Activated CD4-positive, alpha-beta T cell treated with anti-CD3 and anti-CD28 coated beads for 36 hours (primary cell): ENCODE measurements at regions of chr20 and their contacts with region 1.

Region 1: DNA sequence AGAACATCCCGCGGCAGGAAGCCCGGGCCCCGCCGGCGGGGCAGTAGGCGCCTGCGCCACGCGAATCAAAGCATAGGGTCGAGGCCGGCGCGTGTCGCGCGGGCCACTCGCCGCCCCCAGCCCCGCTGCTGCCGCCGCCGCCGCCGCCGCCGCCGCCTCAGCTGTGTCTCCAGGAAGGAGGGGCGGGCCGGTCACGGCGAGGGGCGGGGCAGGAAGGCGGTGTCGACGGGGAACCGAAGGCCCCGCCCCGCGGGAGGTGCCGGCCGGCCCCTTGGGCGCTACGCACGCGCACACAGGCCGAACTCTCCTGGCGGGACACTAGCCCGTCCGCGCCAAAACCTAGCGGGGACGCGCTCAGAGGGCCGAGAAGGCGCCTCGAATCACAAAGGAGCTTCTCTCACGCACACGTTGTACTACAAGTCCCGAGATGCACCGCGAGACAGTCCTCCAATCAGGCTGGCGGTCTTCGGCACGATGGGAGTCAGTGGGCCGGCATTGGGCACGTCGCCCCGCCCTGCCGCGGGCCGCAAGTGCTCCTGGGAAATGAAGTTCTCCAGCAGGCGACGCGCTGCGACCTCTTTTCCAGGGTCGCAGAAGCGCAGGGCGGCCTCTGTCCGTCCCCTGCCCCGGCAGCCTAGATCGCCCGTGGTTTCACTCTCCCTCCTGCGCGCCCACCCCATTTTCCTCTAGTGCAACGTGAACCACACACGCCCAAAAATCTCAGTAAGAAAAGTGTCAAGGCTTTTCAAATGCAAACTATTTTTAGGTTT is at the start of gene RALGAPA2:
- DNase-seq: peak; percentile 97
- ATAC-seq: peak; percentile 97
- H3K4me3 Mint-ChIP-seq: peak within 1 kb of the TSS; percentile 90
- H3K27ac Mint-ChIP-seq: peak within 1 kb of the TSS; percentile 95
- H3K4me1 Mint-ChIP-seq: peaks cover 27% of the 10 kb centered on the region
- H3K27me3 Mint-ChIP-seq: peaks cover 2% of the 10 kb centered on the region
- total RNA-seq, gene RALGAPA2: 20.2 to 26.4 TPM

Region 2: GRCh38 chr20:18793625-18794427 is 1918.8 kb before region 1 on chr20:
- CTCF ChIA-PET with region 1: no interaction called
- POLR2A ChIA-PET with region 1: no interaction called
- intact Hi-C with region 1: loop called (anchors 10 kb)
- DNase-seq: peak; percentile 92
- ATAC-seq: peak; percentile 98
- H3K4me3 Mint-ChIP-seq: peak overlapping the region; percentile 87
- H3K27ac Mint-ChIP-seq: peak overlapping the region; percentile 96
- H3K4me1 Mint-ChIP-seq: peaks cover 17% of the 10 kb centered on the region
- H3K27me3 Mint-ChIP-seq: peaks cover 7% of the 10 kb centered on the region

Region 3: DNA sequence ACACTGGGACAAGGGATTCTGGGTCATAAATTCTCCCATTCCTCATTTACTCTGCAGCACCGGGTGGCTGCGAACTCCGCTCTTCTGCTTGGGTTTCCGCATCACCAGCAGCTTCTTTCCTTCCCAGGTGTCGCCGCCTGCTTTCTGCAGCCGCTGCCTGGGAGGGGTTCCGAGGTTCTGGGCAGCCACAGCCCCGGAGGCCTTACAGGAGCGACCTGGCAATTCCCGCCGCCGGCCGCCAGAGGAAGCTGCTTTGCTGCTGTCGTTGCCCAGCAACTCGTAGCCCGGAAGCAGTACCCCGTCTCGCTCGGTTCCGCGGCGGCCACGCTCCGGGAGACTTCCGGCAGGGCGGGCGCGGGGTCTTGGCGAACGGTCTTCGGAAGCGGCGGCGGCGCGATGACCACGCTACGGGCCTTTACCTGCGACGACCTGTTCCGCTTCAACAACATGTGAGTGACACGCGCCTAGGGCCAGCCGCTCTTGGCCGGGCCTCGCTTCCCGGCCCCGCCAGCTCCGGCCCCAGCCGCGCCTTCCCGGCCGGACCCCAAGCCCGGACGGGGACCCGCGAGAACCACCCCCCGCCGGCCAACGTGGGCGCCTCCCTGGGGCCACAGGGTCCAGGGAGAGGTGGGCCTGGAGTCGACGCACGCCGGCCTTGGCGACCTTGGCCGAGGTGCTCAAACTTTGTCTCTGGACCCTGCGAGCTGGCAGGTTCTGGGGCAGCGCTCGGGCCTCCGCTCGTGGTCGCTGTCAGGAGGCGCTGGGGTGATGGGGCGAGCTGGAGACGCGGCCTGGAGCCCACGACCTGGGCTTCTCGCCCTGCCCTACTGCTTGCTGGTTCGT is 695.4 kb before region 1 on chr20 and contains the start of gene NAA20:
- CTCF ChIA-PET with region 1: no interaction called
- POLR2A ChIA-PET with region 1: no interaction called
- intact Hi-C with region 1: loop called in 1 of 2 experiments (anchors 1 kb)
- DNase-seq: peak; percentile 96
- ATAC-seq: peak; percentile 98
- H3K4me3 Mint-ChIP-seq: peak within 1 kb of the TSS; percentile 93
- H3K27ac Mint-ChIP-seq: peak within 1 kb of the TSS; percentile 88
- H3K4me1 Mint-ChIP-seq: peaks cover 54% of the 10 kb centered on the region
- H3K27me3 Mint-ChIP-seq: no peaks in the 10 kb centered on the region
- total RNA-seq, gene NAA20: 58.6 to 88.7 TPM

Region 4: GRCh38 chr20:20369250-20370093 is 343.2 kb before region 1 on chr20:
- CTCF ChIA-PET with region 1: no interaction called
- POLR2A ChIA-PET with region 1: no interaction called
- intact Hi-C with region 1: loop called in 1 of 2 experiments (anchors 5 kb)
- DNase-seq: peak; percentile 59
- ATAC-seq: peak; percentile 10
- H3K4me3 Mint-ChIP-seq: peak overlapping the region; percentile 77
- H3K27ac Mint-ChIP-seq: peak overlapping the region; percentile 64
- H3K4me1 Mint-ChIP-seq: peaks cover 24% of the 10 kb centered on the region
- H3K27me3 Mint-ChIP-seq: peaks cover 56% of the 10 kb centered on the region

Region 5: DNA sequence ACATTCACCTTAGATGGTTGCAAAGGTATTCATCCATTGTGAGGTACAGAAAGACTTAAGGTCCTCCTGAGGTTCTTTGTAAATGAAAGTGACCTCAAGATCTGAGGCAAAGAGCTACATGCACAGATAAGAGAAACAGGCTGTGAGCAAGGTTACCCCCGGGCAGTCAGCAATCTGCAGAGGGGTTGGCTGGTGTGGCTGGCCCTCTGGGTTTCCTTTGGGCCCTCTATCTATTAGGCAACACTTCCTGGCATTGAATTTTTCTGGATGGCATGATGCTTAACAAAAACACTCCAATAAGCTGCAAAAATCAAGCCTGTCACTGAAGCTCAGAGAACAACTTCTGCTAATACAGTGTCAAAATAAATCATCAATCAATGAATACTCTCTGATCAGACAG is 48.6 kb after region 1 on chr20:
- CTCF ChIA-PET with region 1: no interaction called
- POLR2A ChIA-PET with region 1: no interaction called
- intact Hi-C with region 1: loop called in 1 of 2 experiments (anchors 10 kb)
- DNase-seq: no peak
- ATAC-seq: no peak
- H3K4me3 Mint-ChIP-seq: no peak overlapping the region
- H3K27ac Mint-ChIP-seq: no peak overlapping the region
- H3K4me1 Mint-ChIP-seq: no peaks in the 10 kb centered on the region
- H3K27me3 Mint-ChIP-seq: peaks cover 10% of the 10 kb centered on the region

Region 6: DNA sequence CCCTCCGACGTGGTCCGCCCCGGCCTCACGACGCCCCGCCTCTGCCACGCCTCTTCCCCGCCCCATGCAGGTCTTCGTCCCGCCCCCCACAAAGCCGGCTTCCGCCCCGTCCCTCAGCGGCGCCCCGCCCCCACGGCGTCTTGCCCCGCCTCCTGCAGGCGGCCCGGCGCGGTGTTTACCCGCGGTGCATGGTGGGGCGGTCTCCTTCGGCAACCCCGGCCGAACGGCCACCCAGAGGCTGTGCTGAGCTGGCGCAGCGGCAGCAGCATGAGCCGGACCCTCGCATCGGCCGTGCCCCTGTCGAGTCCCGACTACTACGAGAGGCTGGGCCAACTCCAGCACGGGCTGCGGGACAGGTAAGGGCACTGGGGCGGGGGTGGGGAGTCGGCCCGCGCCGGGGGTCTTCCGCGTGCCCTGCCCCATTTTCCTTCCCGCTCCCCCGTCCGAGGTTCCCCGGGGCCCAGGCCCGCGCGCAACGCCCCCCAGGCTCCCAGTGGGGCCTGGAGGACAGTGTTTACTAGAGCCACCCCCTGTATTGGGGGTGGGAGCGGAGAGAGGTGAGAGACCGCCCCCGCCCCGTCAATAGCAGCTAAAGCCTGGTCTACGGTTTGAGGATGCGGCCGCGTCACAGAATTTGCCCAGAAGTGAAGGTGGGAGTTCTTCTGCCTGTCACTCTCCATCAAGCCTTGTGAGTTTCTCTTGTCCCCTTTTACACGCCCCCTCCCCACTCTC is 413.4 kb after region 1 on chr20 and contains the start of gene KIZ:
- CTCF ChIA-PET with region 1: no interaction called
- POLR2A ChIA-PET with region 1: no interaction called
- intact Hi-C with region 1: loop called (anchors 1 to 2 kb)
- DNase-seq: peak; percentile 99
- ATAC-seq: peak; percentile 97
- H3K4me3 Mint-ChIP-seq: peak within 1 kb of the TSS; percentile 95
- H3K27ac Mint-ChIP-seq: peak within 1 kb of the TSS; percentile 86
- H3K4me1 Mint-ChIP-seq: peaks cover 18% of the 10 kb centered on the region
- H3K27me3 Mint-ChIP-seq: no peaks in the 10 kb centered on the region
- total RNA-seq, gene KIZ: 13.2 to 15.2 TPM

Region 7: GRCh38 chr20:21303061-21303871 is 590.6 kb after region 1 on chr20 and contains the start of gene XRN2:
- CTCF ChIA-PET with region 1: no interaction called
- POLR2A ChIA-PET with region 1: no interaction called
- intact Hi-C with region 1: loop called in 1 of 2 experiments (anchors 1 kb)
- DNase-seq: peak; percentile 98
- ATAC-seq: peak; percentile 85
- H3K4me3 Mint-ChIP-seq: peak within 1 kb of the TSS; percentile 93
- H3K27ac Mint-ChIP-seq: peak within 1 kb of the TSS; percentile 98
- H3K4me1 Mint-ChIP-seq: peaks cover 31% of the 10 kb centered on the region
- H3K27me3 Mint-ChIP-seq: no peaks in the 10 kb centered on the region
- total RNA-seq, gene XRN2: 87.1 to 88.4 TPM